Activated CD4-positive, alpha-beta T cell treated with anti-CD3 and anti-CD28 coated beads for 36 hours (primary cell): ENCODE measurements at regions of chr17 and their contacts with region 1.

Region 1: DNA sequence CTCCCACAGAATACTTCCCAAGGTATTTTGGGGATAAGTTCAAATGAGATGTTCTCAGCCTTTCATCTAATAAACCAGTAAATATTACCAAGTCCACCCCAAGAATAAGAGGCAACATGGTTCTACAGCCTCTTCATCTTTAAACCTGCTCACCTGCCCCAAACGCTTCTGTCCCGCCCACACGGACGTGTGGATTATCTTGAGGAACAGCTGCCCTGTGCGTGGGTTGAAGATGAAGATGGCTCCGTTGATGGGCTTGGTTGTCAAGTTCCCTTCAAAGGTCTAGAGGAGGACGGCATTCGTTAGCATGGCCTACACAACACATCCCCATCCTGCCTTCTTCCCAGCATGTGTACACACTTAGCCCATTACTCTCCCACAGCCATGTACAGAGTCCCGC is 8.4 kb upstream of the RILP start:
- DNase-seq: no peak
- ATAC-seq: no peak
- H3K4me3 Mint-ChIP-seq: no peak overlapping the region
- H3K27ac Mint-ChIP-seq: no peak overlapping the region
- H3K4me1 Mint-ChIP-seq: no peaks in the 10 kb centered on the region
- H3K27me3 Mint-ChIP-seq: no peaks in the 10 kb centered on the region

Region 2: DNA sequence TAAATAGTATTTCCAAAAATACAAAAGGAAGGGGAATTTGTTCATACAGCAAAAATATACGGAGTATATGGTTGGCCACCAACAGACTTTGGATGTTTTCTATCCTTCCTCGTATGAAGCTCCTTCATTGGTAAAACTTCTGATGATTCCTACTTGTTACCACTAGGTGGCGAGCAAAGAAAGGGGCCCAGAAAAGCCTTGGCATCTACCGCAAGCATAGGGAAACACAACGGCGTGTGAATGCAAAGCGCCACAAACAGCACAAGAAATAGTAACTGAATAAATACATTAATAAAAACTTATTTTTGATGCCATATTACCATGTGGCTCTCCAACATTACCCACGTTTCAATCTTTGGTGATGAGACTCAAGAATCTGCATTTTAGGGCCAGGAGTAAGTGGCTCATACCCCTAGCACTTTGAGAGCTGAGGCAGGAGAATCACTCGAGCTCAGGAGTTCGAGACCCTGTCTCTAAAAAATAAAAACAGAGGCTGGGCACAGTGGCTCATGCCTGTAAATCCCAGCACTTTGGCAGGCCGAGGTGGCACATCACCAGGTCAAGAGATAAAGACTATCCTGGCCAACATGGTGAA is 292.6 kb before region 1 on chr17:
- CTCF ChIA-PET with region 1: no interaction called
- POLR2A ChIA-PET with region 1: no interaction called
- intact Hi-C with region 1: no loop called
- DNase-seq: peak; percentile 74
- ATAC-seq: peak; percentile 65
- H3K4me3 Mint-ChIP-seq: peak overlapping the region; percentile 21
- H3K27ac Mint-ChIP-seq: no peak overlapping the region
- H3K4me1 Mint-ChIP-seq: peaks cover 71% of the 10 kb centered on the region
- H3K27me3 Mint-ChIP-seq: no peaks in the 10 kb centered on the region

Region 3: GRCh38 chr17:1673041-1673785 is 15.1 kb after region 1 on chr17:
- CTCF ChIA-PET with region 1: interaction called, 12 read pairs
- POLR2A ChIA-PET with region 1: no interaction called
- intact Hi-C with region 1: no loop called
- DNase-seq: peak; percentile 34
- ATAC-seq: peak; percentile 62
- H3K4me3 Mint-ChIP-seq: no peak overlapping the region
- H3K27ac Mint-ChIP-seq: peak overlapping the region; percentile 70
- H3K4me1 Mint-ChIP-seq: peaks cover 11% of the 10 kb centered on the region
- H3K27me3 Mint-ChIP-seq: no peaks in the 10 kb centered on the region